Activated naive CD4-positive, alpha-beta T cell treated with anti-CD3 and anti-CD28 coated beads for 36 hours (primary cell): ENCODE measurements at regions of chr5 and their contacts with region 1.

Region 1: GRCh38 chr5:6728011-6728794 is 15.0 kb downstream of the TENT4A start:
- DNase-seq: no peak
- H3K4me3 Mint-ChIP-seq: no peak overlapping the region
- H3K27ac Mint-ChIP-seq: no peak overlapping the region
- H3K4me1 Mint-ChIP-seq: peaks cover 87% of the 10 kb centered on the region
- H3K27me3 Mint-ChIP-seq: no peaks in the 10 kb centered on the region

Region 2: DNA sequence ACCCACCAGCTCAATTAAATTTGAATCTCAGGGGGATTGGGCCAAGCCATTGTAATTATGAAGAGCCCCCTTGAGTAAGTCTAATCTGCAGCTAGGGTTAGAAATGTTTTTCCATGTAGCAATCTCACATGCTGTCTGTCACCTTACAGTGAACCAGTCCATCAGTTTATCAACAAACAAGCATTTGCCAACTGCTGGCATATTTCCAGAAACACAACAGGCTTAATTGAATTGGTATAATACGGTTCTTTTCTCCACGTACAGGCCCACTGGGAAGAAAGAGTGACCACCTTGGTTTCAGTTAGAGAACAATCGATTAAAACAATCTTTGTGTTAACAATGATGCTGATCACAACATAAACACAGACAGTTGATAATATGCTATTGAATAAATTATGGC is 162.7 kb before region 1 on chr5:
- CTCF ChIA-PET with region 1: no interaction called
- intact Hi-C with region 1: no loop called
- DNase-seq: no peak
- H3K4me3 Mint-ChIP-seq: no peak overlapping the region
- H3K27ac Mint-ChIP-seq: no peak overlapping the region
- H3K4me1 Mint-ChIP-seq: no peaks in the 10 kb centered on the region
- H3K27me3 Mint-ChIP-seq: peaks cover 19% of the 10 kb centered on the region

Region 3: GRCh38 chr5:6745706-6746222 is 17.6 kb after region 1 on chr5:
- CTCF ChIA-PET with region 1: interaction called, 11 read pairs
- intact Hi-C with region 1: no loop called
- DNase-seq: peak; percentile 35
- H3K4me3 Mint-ChIP-seq: no peak overlapping the region
- H3K27ac Mint-ChIP-seq: no peak overlapping the region
- H3K4me1 Mint-ChIP-seq: peaks cover 7% of the 10 kb centered on the region
- H3K27me3 Mint-ChIP-seq: no peaks in the 10 kb centered on the region

Region 4: DNA sequence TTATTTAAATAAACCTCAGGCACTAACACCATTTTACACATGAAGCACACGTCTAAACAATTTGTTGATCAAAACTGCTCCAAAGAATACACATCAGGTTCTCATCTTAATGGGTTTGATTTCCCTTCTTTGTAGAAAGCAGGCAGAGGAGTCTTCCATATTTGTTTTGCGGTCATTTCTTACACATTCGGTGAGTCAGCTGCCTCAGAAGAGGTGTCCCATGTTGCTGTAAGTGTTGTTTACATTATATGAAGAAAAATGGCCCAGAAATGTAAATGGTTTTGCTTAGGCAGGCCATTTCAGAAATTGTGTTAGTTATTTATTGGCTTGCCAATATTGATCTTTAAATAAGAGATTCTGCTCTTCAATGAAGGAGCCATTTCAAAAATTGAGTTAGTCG is 310.9 kb after region 1 on chr5:
- CTCF ChIA-PET with region 1: no interaction called
- intact Hi-C with region 1: no loop called
- DNase-seq: no peak
- H3K4me3 Mint-ChIP-seq: no peak overlapping the region
- H3K27ac Mint-ChIP-seq: no peak overlapping the region
- H3K4me1 Mint-ChIP-seq: no peaks in the 10 kb centered on the region
- H3K27me3 Mint-ChIP-seq: peaks cover 6% of the 10 kb centered on the region